Lower leg skin (tissue), 4 donors: ENCODE measurements at regions of chr4 and their contacts with region 1.

Region 1: GRCh38 chr4:8241895-8242696 is 27.5 kb upstream of the HTRA3 start:
- DNase-seq: peak; percentile 87 to 97
- H3K4me3 ChIP-seq: no peak overlapping the region
- CTCF ChIP-seq: peak in 1 of 3 donors; percentile 83
- POLR2A ChIP-seq: no peak

Region 2: DNA sequence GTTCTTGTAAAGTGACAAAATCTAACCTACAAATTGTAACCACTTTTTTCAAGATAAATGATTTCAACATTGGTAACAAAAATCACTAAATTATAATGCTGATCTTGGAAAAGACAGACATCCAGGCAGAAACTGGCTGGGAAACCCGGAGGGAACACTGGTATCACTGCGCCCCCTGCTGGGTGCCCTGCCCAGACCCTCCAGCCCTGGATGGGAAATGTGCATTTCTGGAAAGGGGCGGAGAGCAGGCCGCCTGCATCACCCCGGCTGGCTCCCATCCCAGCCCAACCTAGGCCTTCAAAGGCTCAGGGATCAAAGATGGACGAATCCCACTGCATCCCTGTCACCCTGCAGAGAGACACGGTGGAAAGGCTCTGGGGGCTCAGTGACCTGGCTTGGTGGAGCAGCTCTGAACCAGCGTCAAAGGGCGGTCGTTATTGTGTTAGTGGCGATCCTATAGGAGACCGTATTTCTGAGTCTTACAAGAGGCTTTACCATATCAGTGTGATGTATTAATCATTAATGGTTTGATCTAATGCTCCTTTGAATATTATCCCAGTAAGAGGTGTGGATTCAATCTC is 161.2 kb after region 1 on chr4:
- intact Hi-C with region 1: loop called (anchors 10 kb)
- DNase-seq: peak; percentile 71 to 95
- H3K4me3 ChIP-seq: no peak overlapping the region
- CTCF ChIP-seq: peak in 1 of 3 donors; percentile 65
- POLR2A ChIP-seq: no peak

Region 3: GRCh38 chr4:8495851-8496202 is 253.7 kb after region 1 on chr4:
- intact Hi-C with region 1: no loop called
- DNase-seq: no peak
- H3K4me3 ChIP-seq: no peak overlapping the region
- CTCF ChIP-seq: no peak
- POLR2A ChIP-seq: no peak